ENCODE measurements at regions of chr3 and their contacts with region 1.

Region 1: GRCh38 chr3:129249276-129250065 is at the start of gene COPG1:
- DNase-seq: peak; percentile 91
- ATAC-seq: peak; percentile 91
- H3K4me3 Mint-ChIP-seq: peak within 1 kb of the TSS; percentile 94
- H3K27ac Mint-ChIP-seq: peak within 1 kb of the TSS; percentile 94
- H3K4me1 Mint-ChIP-seq: peaks cover 48% of the 10 kb centered on the region
- H3K27me3 Mint-ChIP-seq: no peaks in the 10 kb centered on the region
- total RNA-seq, gene COPG1: 130 to 141 TPM

Region 2: GRCh38 chr3:129068291-129068886 is 181.1 kb before region 1 on chr3:
- CTCF ChIA-PET with region 1: interaction called, 11 read pairs
- DNase-seq: no peak
- ATAC-seq: peak; percentile 62
- H3K4me3 Mint-ChIP-seq: peak overlapping the region; percentile 53
- H3K27ac Mint-ChIP-seq: no peak overlapping the region
- H3K4me1 Mint-ChIP-seq: peaks cover 7% of the 10 kb centered on the region
- H3K27me3 Mint-ChIP-seq: peaks cover 15% of the 10 kb centered on the region

Region 3: DNA sequence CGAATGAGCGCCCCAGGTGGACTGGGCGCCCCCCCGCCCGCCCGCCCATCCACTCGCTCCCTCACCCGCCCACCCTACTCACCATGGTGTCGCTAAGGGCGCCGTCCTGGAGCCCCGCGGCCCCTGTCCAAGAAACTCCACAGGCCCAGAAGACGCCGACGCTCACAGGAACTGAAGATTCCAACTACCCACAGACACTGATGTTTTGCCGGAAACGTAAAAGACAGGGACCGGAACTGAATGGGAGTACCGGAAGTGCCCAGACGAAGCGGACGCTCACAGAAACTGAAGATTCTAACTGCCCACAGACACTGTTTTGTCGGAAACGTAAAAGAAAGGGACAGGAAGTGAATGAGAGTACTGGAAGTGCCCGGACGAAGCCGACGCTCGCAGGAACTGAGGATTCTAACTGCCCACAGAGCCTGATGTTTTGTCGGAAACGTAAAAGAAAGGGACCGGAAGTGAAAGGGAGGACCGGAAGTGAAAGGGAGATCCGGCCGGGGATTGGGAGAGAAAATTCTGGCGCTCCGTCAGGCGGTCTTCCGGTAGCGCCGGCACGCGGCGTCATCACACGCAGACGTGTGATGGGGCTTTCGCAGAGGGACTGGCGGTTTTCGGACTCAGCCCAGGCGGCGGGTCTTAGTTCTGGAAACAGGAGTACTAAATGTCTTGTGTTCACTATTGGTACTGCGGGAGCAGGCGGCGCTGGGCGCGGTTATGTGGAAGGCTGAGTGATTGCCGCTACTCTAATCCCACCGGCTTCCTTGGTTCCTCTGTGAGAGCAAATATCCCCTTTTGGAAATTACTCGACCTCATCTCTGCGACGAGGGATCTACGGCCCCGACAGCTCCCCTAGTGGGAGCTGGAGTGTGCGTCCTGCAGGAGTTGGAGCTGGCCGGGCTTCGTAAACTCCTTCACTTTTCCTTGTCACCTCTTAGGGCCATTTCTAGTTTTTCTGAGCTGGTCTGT is 88.3 kb before region 1 on chr3 and contains the start of gene ISY1:
- CTCF ChIA-PET with region 1: interaction called, 59 read pairs
- DNase-seq: peak; percentile 93
- ATAC-seq: peak; percentile 84
- H3K4me3 Mint-ChIP-seq: peak within 1 kb of the TSS; percentile 92
- H3K27ac Mint-ChIP-seq: peak within 1 kb of the TSS; percentile 97
- H3K4me1 Mint-ChIP-seq: peaks cover 31% of the 10 kb centered on the region
- H3K27me3 Mint-ChIP-seq: no peaks in the 10 kb centered on the region
- total RNA-seq, gene ISY1: 44.4 to 75.9 TPM

Region 4: DNA sequence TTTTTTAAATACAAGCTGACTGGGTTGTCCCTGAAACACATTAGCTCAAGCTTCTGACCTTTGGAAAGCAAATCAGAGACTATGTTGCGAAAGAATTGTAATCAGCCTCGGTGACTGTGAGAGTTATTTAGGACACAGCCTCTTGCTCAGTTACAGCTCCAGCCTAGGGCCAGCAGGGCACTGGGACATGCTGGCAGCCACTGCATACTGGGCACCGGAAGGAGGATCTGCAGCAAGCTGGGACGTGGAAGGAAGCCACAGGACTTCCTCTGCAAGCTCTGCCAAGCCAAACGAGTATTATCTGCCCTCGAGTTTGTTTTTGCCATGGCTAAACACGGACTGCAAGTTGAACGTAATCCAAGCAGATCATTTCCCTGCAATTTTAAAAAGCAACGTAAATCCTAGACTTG is 24.5 kb before region 1 on chr3:
- CTCF ChIA-PET with region 1: interaction called, 33 read pairs
- DNase-seq: peak; percentile 60
- ATAC-seq: peak; percentile 69
- H3K4me3 Mint-ChIP-seq: peak overlapping the region; percentile 46
- H3K27ac Mint-ChIP-seq: peak overlapping the region; percentile 81
- H3K4me1 Mint-ChIP-seq: peaks cover 39% of the 10 kb centered on the region
- H3K27me3 Mint-ChIP-seq: no peaks in the 10 kb centered on the region

Measured in activated CD8-positive, alpha-beta memory T cell treated with anti-CD3 and anti-CD28 coated beads, Interleukin-2, amount 10 ng/mL, durations not matched to agents 7 days and 5 days (primary cell).